ENCODE measurements at regions of chr16 and their contacts with region 1.

Region 1: DNA sequence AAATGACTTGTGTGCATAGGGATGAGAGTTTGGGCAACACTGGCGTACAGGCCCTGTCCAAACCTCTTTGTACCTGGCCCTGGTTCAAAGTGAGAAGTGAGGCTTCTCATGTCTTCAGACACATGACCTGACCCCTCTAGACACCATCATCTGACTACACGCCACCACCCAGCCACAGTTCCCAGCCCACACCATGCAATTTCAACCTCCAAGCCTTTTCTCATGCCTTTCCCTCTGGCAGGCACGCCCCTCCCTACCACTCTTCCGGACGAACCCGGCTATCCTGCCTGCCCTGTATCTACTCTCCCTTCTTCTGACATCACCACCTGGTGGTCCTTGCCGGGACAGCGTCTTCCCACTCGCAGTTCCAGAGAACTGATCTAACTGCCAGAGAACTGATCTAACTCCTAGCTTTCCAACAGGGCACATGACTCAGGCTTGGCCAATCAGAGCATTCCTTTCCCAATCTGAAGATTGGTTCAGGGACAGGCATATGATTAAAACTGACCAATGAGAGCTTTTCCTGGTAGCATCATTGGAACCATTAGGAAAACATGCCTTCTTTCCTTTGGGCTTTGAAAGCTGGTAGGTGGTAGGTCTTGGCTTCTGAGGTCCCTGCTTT is 27.1 kb upstream of the IL21R start:
- DNase-seq: peak; percentile 68
- H3K4me3 ChIP-seq: peak overlapping the region; percentile 43
- H3K27ac ChIP-seq: peak overlapping the region; percentile 70
- H3K4me1 ChIP-seq: peaks cover 55% of the 10 kb centered on the region
- CTCF ChIP-seq: peak; percentile 75

Region 2: DNA sequence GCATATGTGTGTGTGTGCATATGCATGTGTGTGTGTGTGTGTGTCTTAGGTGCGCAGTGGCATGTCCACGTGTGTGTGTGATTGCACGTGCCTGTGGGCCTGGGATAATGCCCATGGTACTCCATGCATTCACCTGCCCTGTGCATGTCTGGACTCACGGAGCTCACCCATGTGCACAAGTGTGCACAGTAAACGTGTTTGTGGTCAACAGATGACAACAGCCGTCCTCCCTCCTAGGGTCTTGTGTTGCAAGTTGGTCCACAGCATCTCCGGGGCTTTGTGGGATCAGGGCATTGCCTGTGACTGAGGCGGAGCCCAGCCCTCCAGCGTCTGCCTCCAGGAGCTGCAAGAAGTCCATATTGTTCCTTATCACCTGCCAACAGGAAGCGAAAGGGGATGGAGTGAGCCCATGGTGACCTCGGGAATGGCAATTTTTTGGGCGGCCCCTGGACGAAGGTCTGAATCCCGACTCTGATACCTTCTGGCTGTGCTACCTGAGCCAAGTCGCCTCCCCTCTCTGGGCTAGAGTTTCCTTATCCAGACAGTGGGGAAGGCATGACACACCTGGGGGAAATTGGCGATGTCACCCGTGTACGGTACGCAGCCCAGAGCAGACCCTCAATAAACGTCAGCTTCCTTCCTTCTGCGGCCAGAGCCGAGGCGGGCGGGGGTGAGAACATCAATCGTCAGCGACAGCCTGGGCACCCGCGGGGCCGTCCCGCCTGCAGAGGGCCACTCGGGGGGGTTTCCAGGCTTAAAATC is 74.7 kb after region 1 on chr16:
- CTCF ChIA-PET with region 1: no interaction called
- POLR2A ChIA-PET with region 1: interaction called, 12 read pairs
- intact Hi-C with region 1: no loop called
- DNase-seq: peak; percentile 23
- H3K4me3 ChIP-seq: no peak overlapping the region
- H3K27ac ChIP-seq: no peak overlapping the region
- H3K4me1 ChIP-seq: peaks cover 27% of the 10 kb centered on the region
- CTCF ChIP-seq: no peak

Measured in OCI-LY7 (cell line).